CD4-positive, alpha-beta memory T cell (primary cell): ENCODE measurements at regions of chr12 and their contacts with region 1.

Region 1: GRCh38 chr12:106223485-106224354 is 24.1 kb downstream of the CKAP4 start:
- DNase-seq: peak; percentile 57 to 73 (median 68)
- H3K4me3 ChIP-seq: no peak overlapping the region
- H3K4me3 Mint-ChIP-seq: peak overlapping the region in 1 of 8 donors; percentile 26
- H3K27ac ChIP-seq: no peak overlapping the region
- H3K27ac Mint-ChIP-seq: peak overlapping the region in 4 of 7 donors; percentile 2 to 73 (median 58)
- H3K4me1 ChIP-seq: peaks cover 18% of the 10 kb centered on the region
- H3K4me1 Mint-ChIP-seq: peaks cover 14 to 27% (median 22%) of the 10 kb centered on the region in 4 donors
- H3K27me3 ChIP-seq: no peaks in the 10 kb centered on the region
- H3K27me3 Mint-ChIP-seq: peaks cover 7 to 12% of the 10 kb centered on the region in 2 donors

Region 2: DNA sequence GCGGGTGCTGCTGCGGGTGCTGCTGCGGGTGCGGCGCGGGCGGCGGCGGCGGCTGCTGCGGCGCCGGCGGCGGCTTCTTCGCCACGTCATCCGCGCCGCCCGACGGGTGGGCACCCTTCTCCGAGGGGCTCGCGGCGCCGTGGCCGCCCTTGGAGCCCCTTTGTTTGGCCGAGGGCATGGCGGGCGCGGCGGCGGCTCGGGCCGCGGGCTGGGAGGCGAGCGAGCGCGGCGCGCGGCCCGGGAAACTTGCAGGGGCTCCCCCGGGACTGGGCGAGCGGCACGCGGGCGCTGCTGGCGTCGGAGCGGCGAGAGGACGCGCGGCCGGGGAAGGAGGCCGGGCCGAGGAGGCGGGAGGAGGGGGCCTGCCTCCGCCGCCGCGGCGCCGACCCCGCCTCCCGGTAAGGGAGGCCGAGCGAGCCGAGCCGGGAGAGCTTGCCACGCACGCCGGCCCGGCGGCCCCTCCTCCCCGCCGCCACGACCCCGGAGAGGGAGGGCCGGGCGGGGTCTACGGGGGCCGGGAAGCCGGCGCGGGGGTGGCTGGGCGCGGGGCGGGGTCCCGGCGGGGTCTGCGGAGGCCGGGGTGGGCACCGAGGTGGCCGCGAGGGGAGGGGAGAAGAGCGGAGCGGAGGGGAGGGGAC is 24.1 kb after region 1 on chr12 and contains the start of gene CKAP4:
- CTCF ChIA-PET with region 1: interaction called, 15 read pairs
- POLR2A ChIA-PET with region 1: interaction called, 30 read pairs
- intact Hi-C with region 1: loop called (anchors 1 kb)
- DNase-seq: peak; percentile 56 to 65 (median 64)
- H3K4me3 ChIP-seq: peak within 1 kb of the TSS; percentile 32 to 54
- H3K4me3 Mint-ChIP-seq: peak within 1 kb of the TSS; percentile 83 to 90 (median 87)
- H3K27ac ChIP-seq: peak within 1 kb of the TSS; percentile 74
- H3K27ac Mint-ChIP-seq: peak within 1 kb of the TSS; percentile 80 to 98 (median 96)
- H3K4me1 ChIP-seq: peaks cover 34% of the 10 kb centered on the region
- H3K4me1 Mint-ChIP-seq: peaks cover 9 to 43% (median 30%) of the 10 kb centered on the region in 4 donors
- H3K27me3 ChIP-seq: no peaks in the 10 kb centered on the region
- H3K27me3 Mint-ChIP-seq: no peaks in the 10 kb centered on the region
- total RNA-seq, gene CKAP4: 12.5 to 13.0 TPM

Region 3: DNA sequence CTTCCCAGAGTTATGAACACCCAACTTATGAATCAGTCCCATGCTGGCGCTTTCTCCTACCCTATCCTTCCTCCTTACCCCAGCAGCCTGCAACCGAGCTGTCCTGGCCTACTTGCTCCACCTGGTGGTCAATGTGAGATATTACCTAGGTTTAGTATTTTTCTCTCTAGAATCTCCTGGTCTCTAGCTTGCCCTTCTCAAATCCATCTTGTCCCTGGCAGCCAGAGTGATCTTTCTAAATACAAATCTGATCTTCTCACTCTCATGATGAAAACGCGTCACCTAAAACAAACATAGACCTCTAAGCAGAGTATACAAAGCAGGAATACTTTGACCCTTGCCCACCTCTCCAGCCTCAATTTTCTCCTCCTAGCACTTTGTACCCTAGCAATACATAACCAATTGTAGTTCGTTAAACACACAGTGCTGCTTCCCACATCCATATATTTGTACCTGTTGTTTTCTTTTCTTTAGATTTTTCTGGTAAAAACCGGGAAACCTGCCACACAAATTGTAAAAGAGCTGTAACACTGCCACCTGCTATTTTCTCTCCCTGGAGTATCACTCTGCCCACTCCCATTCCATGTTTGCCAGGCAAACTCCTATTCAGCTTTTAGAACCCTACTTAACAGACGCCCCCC is 58.9 kb after region 1 on chr12:
- CTCF ChIA-PET with region 1: interaction called, 245 read pairs
- POLR2A ChIA-PET with region 1: interaction called, 24 read pairs
- intact Hi-C with region 1: loop called (anchors 1 kb)
- DNase-seq: peak; percentile 41 to 60 (median 59)
- H3K4me3 ChIP-seq: no peak overlapping the region
- H3K4me3 Mint-ChIP-seq: no peak overlapping the region
- H3K27ac ChIP-seq: no peak overlapping the region
- H3K27ac Mint-ChIP-seq: peak overlapping the region in 4 of 7 donors; percentile 19 to 76 (median 28)
- H3K4me1 ChIP-seq: no peaks in the 10 kb centered on the region
- H3K4me1 Mint-ChIP-seq: peaks cover 0 to 5% (median 2%) of the 10 kb centered on the region in 4 donors
- H3K27me3 ChIP-seq: no peaks in the 10 kb centered on the region
- H3K27me3 Mint-ChIP-seq: peaks cover 0 to 11% of the 10 kb centered on the region in 2 donors

Region 4: GRCh38 chr12:106321139-106321850 is 97.6 kb after region 1 on chr12:
- CTCF ChIA-PET with region 1: interaction called, 10 read pairs
- POLR2A ChIA-PET with region 1: no interaction called
- intact Hi-C with region 1: no loop called
- DNase-seq: no peak
- H3K4me3 ChIP-seq: no peak overlapping the region
- H3K4me3 Mint-ChIP-seq: no peak overlapping the region
- H3K27ac ChIP-seq: no peak overlapping the region
- H3K27ac Mint-ChIP-seq: peak overlapping the region in 4 of 7 donors; percentile 5 to 87 (median 34)
- H3K4me1 ChIP-seq: no peaks in the 10 kb centered on the region
- H3K4me1 Mint-ChIP-seq: peaks cover 5 to 35% (median 15%) of the 10 kb centered on the region in 4 donors
- H3K27me3 ChIP-seq: no peaks in the 10 kb centered on the region
- H3K27me3 Mint-ChIP-seq: no peaks in the 10 kb centered on the region

Region 5: GRCh38 chr12:106357549-106358395 is 134.1 kb after region 1 on chr12 and contains the start of gene POLR3B:
- CTCF ChIA-PET with region 1: interaction called, 27 read pairs
- POLR2A ChIA-PET with region 1: interaction called, 10 read pairs
- intact Hi-C with region 1: loop called (anchors 1 kb)
- DNase-seq: peak; percentile 96 to 98 (median 97)
- H3K4me3 ChIP-seq: peak within 1 kb of the TSS; percentile 77 to 87
- H3K4me3 Mint-ChIP-seq: peak within 1 kb of the TSS; percentile 86 to 95 (median 94)
- H3K27ac ChIP-seq: peak within 1 kb of the TSS; percentile 68
- H3K27ac Mint-ChIP-seq: peak within 1 kb of the TSS; percentile 92 to 97 (median 95)
- H3K4me1 ChIP-seq: peaks cover 20% of the 10 kb centered on the region
- H3K4me1 Mint-ChIP-seq: peaks cover 10 to 20% (median 16%) of the 10 kb centered on the region in 4 donors
- H3K27me3 ChIP-seq: no peaks in the 10 kb centered on the region
- H3K27me3 Mint-ChIP-seq: no peaks in the 10 kb centered on the region
- total RNA-seq, gene POLR3B: 6.6 to 7.5 TPM